ENCODE measurements at regions of chr4 and their contacts with region 1.

Region 1: GRCh38 chr4:76023389-76023788 is at the start of gene CXCL10:
- DNase-seq: no peak
- ATAC-seq: peak; percentile 66
- H3K4me3 Mint-ChIP-seq: no peak within 1 kb of the TSS
- H3K27ac Mint-ChIP-seq: no peak within 1 kb of the TSS
- H3K4me1 Mint-ChIP-seq: peaks cover 29% of the 10 kb centered on the region
- H3K27me3 Mint-ChIP-seq: no peaks in the 10 kb centered on the region
- CTCF ChIP-seq: no peak
- total RNA-seq, gene CXCL10: 0.17 TPM in 1 of 2 replicates, not detected in the other

Region 2: GRCh38 chr4:76011700-76012387 is 11.5 kb before region 1 on chr4:
- CTCF ChIA-PET with region 1: no interaction called
- POLR2A ChIA-PET with region 1: no interaction called
- intact Hi-C with region 1: loop called (anchors 2 kb)
- DNase-seq: no peak
- ATAC-seq: peak; percentile 31
- H3K4me3 Mint-ChIP-seq: no peak overlapping the region
- H3K27ac Mint-ChIP-seq: peak overlapping the region; percentile 47
- H3K4me1 Mint-ChIP-seq: peaks cover 20% of the 10 kb centered on the region
- H3K27me3 Mint-ChIP-seq: no peaks in the 10 kb centered on the region
- CTCF ChIP-seq: no peak

Region 3: GRCh38 chr4:76061982-76062381 is 38.6 kb after region 1 on chr4:
- CTCF ChIA-PET with region 1: no interaction called
- POLR2A ChIA-PET with region 1: no interaction called
- intact Hi-C with region 1: loop called (anchors 2 kb)
- DNase-seq: no peak
- ATAC-seq: peak; percentile 96
- H3K4me3 Mint-ChIP-seq: peak overlapping the region; percentile 49
- H3K27ac Mint-ChIP-seq: peak overlapping the region; percentile 75
- H3K4me1 Mint-ChIP-seq: peaks cover 42% of the 10 kb centered on the region
- H3K27me3 Mint-ChIP-seq: no peaks in the 10 kb centered on the region
- CTCF ChIP-seq: no peak

Region 4: GRCh38 chr4:76108467-76109181 is 85.2 kb after region 1 on chr4:
- CTCF ChIA-PET with region 1: no interaction called
- POLR2A ChIA-PET with region 1: no interaction called
- intact Hi-C with region 1: no loop called
- DNase-seq: no peak
- ATAC-seq: no peak
- H3K4me3 Mint-ChIP-seq: no peak overlapping the region
- H3K27ac Mint-ChIP-seq: no peak overlapping the region
- H3K4me1 Mint-ChIP-seq: no peaks in the 10 kb centered on the region
- H3K27me3 Mint-ChIP-seq: no peaks in the 10 kb centered on the region
- CTCF ChIP-seq: no peak

Region 5: GRCh38 chr4:76858319-76858718 is 834.9 kb after region 1 on chr4:
- CTCF ChIA-PET with region 1: no interaction called
- POLR2A ChIA-PET with region 1: no interaction called
- intact Hi-C with region 1: no loop called
- DNase-seq: no peak
- ATAC-seq: no peak
- H3K4me3 Mint-ChIP-seq: no peak overlapping the region
- H3K27ac Mint-ChIP-seq: no peak overlapping the region
- H3K4me1 Mint-ChIP-seq: no peaks in the 10 kb centered on the region
- H3K27me3 Mint-ChIP-seq: peaks cover 9% of the 10 kb centered on the region
- CTCF ChIP-seq: no peak